Activated B cell treated with CpG ODN at 0.5 μM for 24 hours (primary cell): ENCODE measurements at regions of chr6 and their contacts with region 1.

Region 1: GRCh38 chr6:25223490-25223991 is 55.6 kb upstream of the CARMIL1 start:
- DNase-seq: peak; percentile 28
- ATAC-seq: peak; percentile 50
- H3K4me3 Mint-ChIP-seq: peak overlapping the region; percentile 65
- H3K27ac Mint-ChIP-seq: no peak overlapping the region
- H3K4me1 Mint-ChIP-seq: peaks cover 7% of the 10 kb centered on the region
- H3K27me3 Mint-ChIP-seq: peaks cover 5% of the 10 kb centered on the region
- CTCF ChIP-seq: peak; percentile 65

Region 2: GRCh38 chr6:24340998-24341938 is 882.3 kb before region 1 on chr6:
- CTCF ChIA-PET with region 1: no interaction called
- POLR2A ChIA-PET with region 1: no interaction called
- intact Hi-C with region 1: no loop called
- DNase-seq: no peak
- ATAC-seq: no peak
- H3K4me3 Mint-ChIP-seq: no peak overlapping the region
- H3K27ac Mint-ChIP-seq: no peak overlapping the region
- H3K4me1 Mint-ChIP-seq: no peaks in the 10 kb centered on the region
- H3K27me3 Mint-ChIP-seq: peaks cover 15% of the 10 kb centered on the region
- CTCF ChIP-seq: no peak

Region 3: GRCh38 chr6:25250878-25251277 is 27.3 kb after region 1 on chr6:
- CTCF ChIA-PET with region 1: no interaction called
- POLR2A ChIA-PET with region 1: no interaction called
- intact Hi-C with region 1: no loop called
- DNase-seq: no peak
- ATAC-seq: no peak
- H3K4me3 Mint-ChIP-seq: no peak overlapping the region
- H3K27ac Mint-ChIP-seq: no peak overlapping the region
- H3K4me1 Mint-ChIP-seq: no peaks in the 10 kb centered on the region
- H3K27me3 Mint-ChIP-seq: peaks cover 14% of the 10 kb centered on the region
- CTCF ChIP-seq: no peak

Region 4: DNA sequence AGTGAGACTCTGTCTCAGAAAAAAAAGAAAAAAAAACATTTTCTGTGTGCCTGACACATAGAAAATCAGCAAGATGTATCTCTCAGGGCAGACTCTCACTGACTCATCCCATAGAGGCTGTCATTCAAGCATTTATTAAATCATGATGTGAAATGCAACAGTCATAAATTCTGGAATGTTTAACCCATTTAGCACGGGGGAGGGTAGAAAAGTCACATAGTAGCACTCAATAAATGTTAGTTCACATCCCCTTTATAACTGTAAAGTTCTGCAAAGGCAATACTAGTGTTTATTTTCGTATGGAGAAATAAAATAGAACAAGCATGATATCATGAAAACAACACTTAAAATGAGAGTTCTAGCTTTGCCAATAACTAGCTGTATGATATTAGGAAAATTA is 40.1 kb after region 1 on chr6:
- CTCF ChIA-PET with region 1: interaction called, 18 read pairs
- POLR2A ChIA-PET with region 1: no interaction called
- intact Hi-C with region 1: loop called (anchors 2 kb)
- DNase-seq: no peak
- ATAC-seq: no peak
- H3K4me3 Mint-ChIP-seq: no peak overlapping the region
- H3K27ac Mint-ChIP-seq: no peak overlapping the region
- H3K4me1 Mint-ChIP-seq: peaks cover 2% of the 10 kb centered on the region
- H3K27me3 Mint-ChIP-seq: peaks cover 5% of the 10 kb centered on the region
- CTCF ChIP-seq: no peak

Region 5: DNA sequence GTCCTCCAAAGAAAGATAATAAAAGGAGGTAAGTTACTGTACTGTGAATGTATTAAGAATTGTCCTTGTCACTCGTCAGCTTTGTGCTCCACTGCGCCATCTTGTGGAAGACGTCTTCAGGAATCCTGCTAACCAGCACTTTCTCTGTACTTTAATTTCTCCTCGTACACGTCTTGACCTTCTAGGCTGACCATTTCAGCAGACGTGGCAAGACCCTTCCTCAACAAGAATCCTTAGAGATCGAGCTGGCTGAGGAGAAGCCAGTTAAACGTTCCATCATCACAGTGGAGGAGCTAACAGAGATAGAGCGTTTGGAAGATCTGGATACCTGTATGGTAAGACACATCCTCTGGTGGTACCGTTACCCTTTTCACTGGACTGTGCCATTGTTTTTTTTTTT is 333.0 kb after region 1 on chr6:
- CTCF ChIA-PET with region 1: interaction called, 61 read pairs
- POLR2A ChIA-PET with region 1: no interaction called
- intact Hi-C with region 1: loop called (anchors 1 kb)
- DNase-seq: peak; percentile 47
- ATAC-seq: peak; percentile 47
- H3K4me3 Mint-ChIP-seq: no peak overlapping the region
- H3K27ac Mint-ChIP-seq: no peak overlapping the region
- H3K4me1 Mint-ChIP-seq: peaks cover 9% of the 10 kb centered on the region
- H3K27me3 Mint-ChIP-seq: no peaks in the 10 kb centered on the region
- CTCF ChIP-seq: peak; percentile 90

Region 6: GRCh38 chr6:25717866-25718740 is 494.6 kb after region 1 on chr6:
- CTCF ChIA-PET with region 1: interaction called, 7 read pairs
- POLR2A ChIA-PET with region 1: no interaction called
- intact Hi-C with region 1: loop called (anchors 2 kb)
- DNase-seq: no peak
- ATAC-seq: no peak
- H3K4me3 Mint-ChIP-seq: no peak overlapping the region
- H3K27ac Mint-ChIP-seq: no peak overlapping the region
- H3K4me1 Mint-ChIP-seq: no peaks in the 10 kb centered on the region
- H3K27me3 Mint-ChIP-seq: peaks cover 15% of the 10 kb centered on the region
- CTCF ChIP-seq: no peak

Region 7: DNA sequence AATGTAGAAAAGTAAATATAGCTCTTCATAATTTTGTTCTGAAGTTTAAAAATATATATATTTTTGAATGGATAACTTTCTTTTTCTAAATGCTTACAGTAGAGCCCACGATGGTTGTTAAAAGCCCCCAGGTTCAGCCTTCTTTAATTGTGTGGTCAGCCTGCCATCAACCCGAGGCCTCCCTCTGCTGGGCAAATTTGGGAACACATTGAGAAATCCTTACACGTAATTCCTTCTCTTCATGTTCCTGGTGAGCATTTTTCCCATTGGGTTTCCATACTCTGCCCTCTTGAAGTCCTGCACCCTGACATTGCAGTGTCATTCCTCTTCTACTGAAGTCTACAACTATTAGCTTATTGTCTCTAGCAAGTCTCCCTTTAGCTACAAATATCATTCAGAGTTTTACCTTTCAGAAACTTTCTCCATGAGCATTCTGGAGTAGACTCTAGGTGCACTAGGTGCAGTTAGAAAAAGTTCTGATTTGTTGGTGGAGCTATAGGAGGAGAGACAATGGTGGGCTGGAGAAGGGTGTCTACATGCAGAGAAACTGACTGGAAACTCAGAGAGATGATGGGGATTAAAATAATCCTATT is 779.7 kb after region 1 on chr6:
- CTCF ChIA-PET with region 1: interaction called, 8 read pairs
- POLR2A ChIA-PET with region 1: no interaction called
- intact Hi-C with region 1: loop called (anchors 2 kb)
- DNase-seq: no peak
- ATAC-seq: peak; percentile 49
- H3K4me3 Mint-ChIP-seq: no peak overlapping the region
- H3K27ac Mint-ChIP-seq: no peak overlapping the region
- H3K4me1 Mint-ChIP-seq: no peaks in the 10 kb centered on the region
- H3K27me3 Mint-ChIP-seq: no peaks in the 10 kb centered on the region
- CTCF ChIP-seq: peak; percentile 39